Activated CD4-positive, alpha-beta T cell treated with anti-CD3 and anti-CD28 coated beads, Interleukin-2, amount 10 ng/mL, durations not matched to agents 7 days and 5 days (primary cell): ENCODE measurements at regions of chr11 and their contacts with region 1.

Region 1: DNA sequence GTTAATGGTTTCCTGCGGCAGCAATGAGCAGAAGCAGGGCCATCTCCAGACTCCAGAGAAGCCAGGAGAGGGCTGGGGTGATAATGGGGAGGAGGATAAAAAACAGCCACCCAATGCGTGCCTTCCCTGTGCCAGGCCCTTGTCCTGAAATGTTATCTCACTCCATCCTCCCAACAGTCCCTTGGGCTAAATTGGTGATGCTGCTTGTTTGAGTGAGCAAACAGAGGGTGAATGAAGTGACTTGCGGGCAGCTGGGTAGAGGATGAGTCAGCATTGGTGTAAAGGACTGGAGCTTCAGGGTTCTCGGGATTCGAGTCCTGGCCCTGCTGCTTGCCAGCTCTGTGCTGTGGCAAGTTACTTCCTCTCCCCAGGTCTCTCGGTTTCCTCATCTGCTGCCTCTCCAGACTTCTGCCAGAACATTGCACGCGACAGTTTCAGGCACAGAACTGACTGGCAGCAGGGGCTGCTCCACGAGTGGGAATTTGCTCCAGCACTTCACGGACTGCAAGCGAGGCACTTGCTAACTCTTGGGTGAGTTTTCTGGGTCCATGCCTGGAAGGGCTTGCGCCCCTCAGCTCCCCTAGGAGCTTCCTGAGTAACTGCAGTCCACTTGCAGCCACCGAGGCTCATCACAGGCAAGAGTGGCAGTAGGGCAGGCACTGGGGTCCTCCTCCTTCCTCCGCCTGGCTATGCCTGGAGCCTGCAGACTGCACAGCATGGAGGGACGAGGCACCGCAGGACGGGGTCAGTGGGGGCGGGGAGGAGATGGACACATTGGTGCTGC is at the start of gene P2RY6:
- DNase-seq: no peak
- H3K4me3 Mint-ChIP-seq: no peak within 1 kb of the TSS
- H3K27ac Mint-ChIP-seq: no peak within 1 kb of the TSS
- H3K4me1 Mint-ChIP-seq: no peaks in the 10 kb centered on the region
- H3K27me3 Mint-ChIP-seq: peaks cover 15% of the 10 kb centered on the region
- total RNA-seq, gene P2RY6: not detected

Region 2: DNA sequence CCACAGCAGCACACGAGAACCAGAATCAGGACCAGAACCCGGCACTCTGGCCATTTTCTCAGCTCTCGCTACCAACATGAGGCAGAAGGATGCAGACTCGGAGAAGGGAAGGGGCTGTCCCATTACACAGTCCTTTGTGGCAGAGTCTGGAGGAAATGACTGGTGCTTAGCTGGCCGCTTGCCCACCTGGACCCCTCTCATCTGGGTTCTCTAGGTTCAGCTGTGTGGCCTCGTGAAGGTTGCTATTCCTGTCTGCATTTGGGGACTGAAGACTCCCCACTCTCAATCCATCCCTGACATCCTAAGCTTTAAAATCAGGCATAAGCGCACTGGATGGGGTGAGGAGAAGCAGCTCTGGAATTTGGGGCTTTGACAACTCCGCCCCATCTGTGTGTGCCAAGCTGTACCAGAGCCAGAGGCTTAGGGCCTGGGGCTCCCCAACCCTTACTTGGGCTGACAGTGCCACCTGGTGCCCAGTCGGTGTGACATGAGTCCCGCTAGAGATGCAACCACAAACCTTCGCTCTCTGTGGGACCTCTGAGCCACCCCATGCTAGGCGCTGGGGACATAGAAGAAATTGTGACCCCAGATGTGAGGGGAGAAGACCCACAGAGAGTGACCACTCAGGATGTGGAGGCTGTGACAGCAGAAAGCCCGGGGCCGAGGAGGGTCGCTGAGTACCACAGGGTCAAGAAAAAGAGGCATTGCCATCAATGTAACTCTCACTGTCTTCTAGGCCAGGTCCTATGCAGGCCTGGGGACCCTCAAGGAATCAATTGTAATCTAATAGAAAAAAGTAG is 94.2 kb before region 1 on chr11:
- CTCF ChIA-PET with region 1: no interaction called
- POLR2A ChIA-PET with region 1: no interaction called
- DNase-seq: peak; percentile 87
- H3K4me3 Mint-ChIP-seq: no peak overlapping the region
- H3K27ac Mint-ChIP-seq: no peak overlapping the region
- H3K4me1 Mint-ChIP-seq: peaks cover 26% of the 10 kb centered on the region
- H3K27me3 Mint-ChIP-seq: peaks cover 16% of the 10 kb centered on the region

Region 3: GRCh38 chr11:73288873-73289707 is 17.0 kb after region 1 on chr11:
- CTCF ChIA-PET with region 1: interaction called, 10 read pairs
- POLR2A ChIA-PET with region 1: no interaction called
- DNase-seq: peak; percentile 51
- H3K4me3 Mint-ChIP-seq: no peak overlapping the region
- H3K27ac Mint-ChIP-seq: no peak overlapping the region
- H3K4me1 Mint-ChIP-seq: peaks cover 18% of the 10 kb centered on the region
- H3K27me3 Mint-ChIP-seq: peaks cover 5% of the 10 kb centered on the region

Region 4: DNA sequence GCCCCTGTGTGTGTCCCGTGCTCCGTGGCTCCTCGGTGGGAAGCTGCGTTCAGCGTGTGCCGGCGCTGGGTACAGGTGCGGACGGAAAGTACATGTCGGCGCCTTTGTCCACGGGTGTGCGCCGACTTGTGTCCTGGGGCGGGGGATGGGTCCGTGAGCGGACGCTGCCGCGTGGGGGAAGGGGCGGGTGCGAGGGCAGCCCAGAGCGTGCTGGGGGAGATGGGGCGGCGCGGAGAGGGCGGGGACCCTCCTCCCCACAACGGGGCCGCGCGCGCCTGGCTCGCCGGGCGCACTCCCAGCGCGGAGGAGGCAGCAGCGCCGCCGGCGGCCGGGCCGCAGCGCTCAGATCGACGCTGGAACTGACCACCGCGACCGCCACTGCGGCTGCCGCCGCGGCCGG is 70.5 kb after region 1 on chr11:
- CTCF ChIA-PET with region 1: no interaction called
- POLR2A ChIA-PET with region 1: no interaction called
- DNase-seq: no peak
- H3K4me3 Mint-ChIP-seq: no peak overlapping the region
- H3K27ac Mint-ChIP-seq: no peak overlapping the region
- H3K4me1 Mint-ChIP-seq: no peaks in the 10 kb centered on the region
- H3K27me3 Mint-ChIP-seq: no peaks in the 10 kb centered on the region